ENCODE measurements at regions of chrX and their contacts with region 1.

Region 1: GRCh38 chrX:49043220-49043986 is at the start of gene TFE3:
- DNase-seq: peak; percentile 95 to 98
- ATAC-seq: peak; percentile 91 to 96 (median 94)
- H3K4me3 ChIP-seq: peak within 1 kb of the TSS; percentile 64 to 92 (median 80)
- H3K27ac ChIP-seq: peak within 1 kb of the TSS; percentile 91 to 99 (median 96)
- H3K4me1 ChIP-seq: peaks cover 0 to 35% (median 15%) of the 10 kb centered on the region in 9 donors
- H3K27me3 ChIP-seq: no peaks in the 10 kb centered on the region
- CTCF ChIP-seq: peak; percentile 38 to 76 (median 64)
- total RNA-seq, gene TFE3: 13.8 to 29.1 (median 16.1) TPM

Region 2: DNA sequence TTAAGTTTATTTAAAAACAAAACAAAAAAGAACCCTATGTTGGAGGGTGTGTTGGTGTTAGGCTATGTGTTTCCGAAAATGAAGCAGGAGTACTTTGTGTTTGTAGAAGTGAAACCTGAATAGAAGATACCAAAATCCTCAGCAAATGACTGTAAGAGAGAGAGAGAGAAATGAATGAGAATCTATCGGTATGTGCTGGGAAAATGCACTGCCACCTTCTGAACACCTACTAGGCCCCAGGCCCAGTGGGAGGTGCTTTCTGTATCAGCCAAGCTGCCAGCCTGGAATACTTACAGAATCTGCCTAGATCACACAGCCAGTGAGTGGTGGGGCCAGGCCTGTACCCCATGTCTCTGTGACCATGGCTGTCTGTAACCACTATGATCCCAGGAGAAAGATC is 109.6 kb before region 1 on chrX:
- intact Hi-C with region 1: no loop called
- DNase-seq: no peak
- ATAC-seq: no peak
- H3K4me3 ChIP-seq: no peak overlapping the region
- H3K27ac ChIP-seq: no peak overlapping the region
- H3K4me1 ChIP-seq: peaks cover 0 to 40% (median 11%) of the 10 kb centered on the region in 9 donors
- H3K27me3 ChIP-seq: no peaks in the 10 kb centered on the region
- CTCF ChIP-seq: no peak

Region 3: DNA sequence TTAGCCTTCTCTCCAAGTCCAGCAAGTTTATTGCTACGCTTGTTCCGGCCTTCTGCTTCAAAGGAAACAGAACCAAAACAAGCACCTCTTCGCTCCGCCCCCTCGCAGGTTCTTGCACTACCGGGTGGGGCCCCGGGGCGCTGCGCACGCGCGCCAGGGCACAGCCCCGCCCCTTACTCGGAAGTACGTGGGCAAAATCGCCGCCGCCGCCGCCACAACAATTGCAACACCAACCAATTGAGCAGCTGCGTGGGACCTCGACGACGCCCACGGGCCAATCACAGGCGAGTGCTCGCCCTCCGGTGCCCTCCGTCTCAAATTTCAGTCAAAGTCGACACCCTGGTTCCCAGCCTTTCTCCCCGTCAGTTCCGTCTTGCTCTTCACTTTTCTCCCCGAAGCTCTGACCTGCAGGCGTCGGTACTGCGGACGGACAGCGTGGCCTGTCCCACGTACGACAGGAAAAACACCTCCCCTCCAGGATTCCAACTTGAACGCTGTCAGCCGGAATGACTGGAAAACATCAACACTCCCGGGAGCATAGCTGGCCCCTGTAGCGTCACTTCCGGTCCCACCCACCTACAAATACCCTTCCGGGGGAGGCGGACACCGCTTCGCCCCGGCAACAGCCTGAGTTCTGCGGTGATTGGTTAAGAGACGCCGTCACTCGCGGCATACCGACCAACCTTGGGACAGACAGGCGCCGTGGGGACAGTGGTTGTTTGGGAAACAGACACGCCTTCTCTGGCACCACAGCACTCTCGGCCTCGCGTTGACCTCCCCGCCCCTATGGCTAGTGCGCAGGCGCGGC is 85.4 kb before region 1 on chrX:
- intact Hi-C with region 1: loop called in 1 of 10 experiments (anchors 10 kb)
- DNase-seq: peak; percentile 92 to 96
- ATAC-seq: peak; percentile 92 to 97 (median 96)
- H3K4me3 ChIP-seq: peak overlapping the region; percentile 21 to 72 (median 64)
- H3K27ac ChIP-seq: peak overlapping the region; percentile 75 to 99 (median 95)
- H3K4me1 ChIP-seq: peaks cover 0 to 51% (median 31%) of the 10 kb centered on the region in 9 donors
- H3K27me3 ChIP-seq: no peaks in the 10 kb centered on the region
- CTCF ChIP-seq: no peak

Region 4: DNA sequence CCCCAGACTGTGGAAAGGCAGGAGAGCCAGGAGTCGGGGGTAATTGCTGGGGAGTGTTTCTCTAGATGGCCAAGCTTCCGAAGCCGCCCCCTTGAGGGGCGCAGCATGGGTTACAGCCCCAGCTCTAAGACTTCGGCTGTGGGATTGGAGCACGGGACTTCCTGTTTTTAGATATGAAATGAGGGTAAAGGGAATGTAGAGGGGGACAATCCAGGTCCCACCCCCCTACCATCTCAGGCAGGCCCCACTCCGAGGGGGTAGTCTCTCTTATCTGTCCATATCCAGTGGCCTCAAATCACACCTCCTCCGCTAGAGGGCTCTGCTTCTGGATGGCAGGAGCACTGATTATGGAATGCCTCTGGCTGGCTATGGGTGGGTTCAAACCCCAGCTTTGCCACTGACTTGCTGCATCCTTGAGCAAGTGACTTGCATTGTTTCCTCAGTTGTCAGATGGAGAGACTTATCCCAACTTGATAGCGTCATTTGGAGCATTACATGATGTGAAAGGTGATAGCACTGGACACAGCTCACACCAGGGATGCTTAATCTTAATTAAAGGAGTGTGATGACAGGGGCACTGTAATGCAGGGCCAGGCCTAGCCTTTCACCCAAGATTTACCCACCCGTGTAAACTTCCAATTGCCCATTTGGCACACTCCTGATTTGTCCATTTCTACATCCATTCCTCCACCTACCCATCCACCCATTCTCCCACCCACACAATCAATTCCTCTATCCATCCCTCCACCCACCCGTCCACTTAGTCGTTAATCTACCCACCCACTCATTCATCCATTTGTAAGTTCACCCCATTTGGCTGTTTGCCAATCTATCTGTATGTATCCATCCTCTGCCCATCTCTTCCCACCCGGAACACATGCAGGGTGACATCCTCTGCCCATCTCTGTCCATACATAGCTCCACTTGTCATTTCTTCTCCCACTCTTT is 70.9 kb before region 1 on chrX:
- intact Hi-C with region 1: loop called in 2 of 10 experiments (anchors 10 kb)
- DNase-seq: peak in 1 of 2 donors; percentile 13
- ATAC-seq: peak in 7 of 8 donors; percentile 21 to 73 (median 59)
- H3K4me3 ChIP-seq: peak overlapping the region in 9 of 10 donors; percentile 21 to 50 (median 39)
- H3K27ac ChIP-seq: peak overlapping the region in 4 of 10 donors; percentile 34 to 58 (median 44)
- H3K4me1 ChIP-seq: peaks cover 0 to 12% (median 0%) of the 10 kb centered on the region in 9 donors
- H3K27me3 ChIP-seq: peaks cover 0 to 11% (median 0%) of the 10 kb centered on the region in 7 donors
- CTCF ChIP-seq: peak in 8 of 9 donors; percentile 8 to 62 (median 51)

Region 5: GRCh38 chrX:49002091-49002935 is 41.1 kb before region 1 on chrX and contains the start of gene GRIPAP1:
- intact Hi-C with region 1: loop called in 5 of 10 experiments (anchors 1 to 5 kb)
- DNase-seq: peak; percentile 66 to 74
- ATAC-seq: peak; percentile 88 to 98 (median 94)
- H3K4me3 ChIP-seq: peak within 1 kb of the TSS; percentile 47 to 82 (median 75)
- H3K27ac ChIP-seq: peak within 1 kb of the TSS; percentile 35 to 94 (median 84)
- H3K4me1 ChIP-seq: peaks cover 0 to 9% (median 0%) of the 10 kb centered on the region in 9 donors
- H3K27me3 ChIP-seq: no peaks in the 10 kb centered on the region
- CTCF ChIP-seq: no peak
- total RNA-seq, gene GRIPAP1: 16.2 to 26.0 (median 21.9) TPM

Region 6: DNA sequence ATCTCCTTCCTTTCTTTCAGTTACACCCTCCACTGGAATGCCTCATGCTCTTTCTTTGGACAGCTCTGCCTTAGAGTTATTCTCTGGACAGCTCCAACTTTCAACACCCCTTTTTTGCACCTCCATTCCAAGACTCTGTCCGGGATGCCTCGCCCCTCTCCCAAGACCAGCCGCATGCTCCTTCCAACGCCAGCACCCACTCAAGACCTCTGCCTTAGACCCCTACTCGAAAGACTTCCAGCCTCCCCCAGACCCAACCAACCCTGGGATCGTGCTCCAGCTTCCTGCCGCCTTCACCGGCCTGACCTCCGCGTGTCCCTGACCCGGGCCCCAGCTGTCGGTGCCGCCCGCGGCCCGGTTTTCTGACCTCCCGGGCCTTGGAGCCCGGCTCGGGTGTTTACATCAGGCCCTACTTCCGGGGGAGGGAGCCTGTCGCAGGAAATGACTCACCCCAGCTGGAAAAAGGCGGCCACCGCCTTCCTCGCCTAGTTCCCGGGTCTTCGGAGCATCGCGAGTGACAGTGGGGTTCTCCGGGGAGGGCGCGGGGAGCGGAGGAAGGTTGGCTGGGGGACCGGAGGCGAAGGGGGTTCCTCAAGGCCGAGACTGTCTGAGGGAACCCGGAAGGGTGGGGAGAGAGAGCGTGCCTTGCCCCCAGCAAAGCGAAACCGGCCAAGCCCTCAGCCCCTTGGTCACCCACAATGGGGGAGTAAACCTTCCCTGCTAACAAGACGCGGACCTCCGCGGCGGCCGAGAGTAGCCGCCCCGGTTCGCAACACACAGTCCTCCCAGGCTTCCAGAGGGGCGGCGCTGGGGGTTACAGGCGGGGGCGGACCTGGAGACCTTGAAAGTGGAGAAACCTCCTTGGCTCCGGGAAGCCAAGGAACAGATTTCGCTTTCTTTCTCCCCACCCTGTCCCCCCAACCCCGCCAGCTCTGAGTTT is 36.4 kb after region 1 on chrX and contains the start of gene WDR45:
- intact Hi-C with region 1: loop called in 1 of 10 experiments (anchors 5 kb)
- DNase-seq: peak; percentile 70 to 77
- ATAC-seq: peak; percentile 76 to 96 (median 93)
- H3K4me3 ChIP-seq: peak within 1 kb of the TSS; percentile 53 to 75 (median 68)
- H3K27ac ChIP-seq: peak within 1 kb of the TSS; percentile 89 to 98 (median 95)
- H3K4me1 ChIP-seq: peaks cover 0 to 13% (median 0%) of the 10 kb centered on the region in 9 donors
- H3K27me3 ChIP-seq: no peaks in the 10 kb centered on the region
- CTCF ChIP-seq: no peak
- total RNA-seq, gene WDR45: 45.7 to 84.7 (median 60.6) TPM

Region 7: DNA sequence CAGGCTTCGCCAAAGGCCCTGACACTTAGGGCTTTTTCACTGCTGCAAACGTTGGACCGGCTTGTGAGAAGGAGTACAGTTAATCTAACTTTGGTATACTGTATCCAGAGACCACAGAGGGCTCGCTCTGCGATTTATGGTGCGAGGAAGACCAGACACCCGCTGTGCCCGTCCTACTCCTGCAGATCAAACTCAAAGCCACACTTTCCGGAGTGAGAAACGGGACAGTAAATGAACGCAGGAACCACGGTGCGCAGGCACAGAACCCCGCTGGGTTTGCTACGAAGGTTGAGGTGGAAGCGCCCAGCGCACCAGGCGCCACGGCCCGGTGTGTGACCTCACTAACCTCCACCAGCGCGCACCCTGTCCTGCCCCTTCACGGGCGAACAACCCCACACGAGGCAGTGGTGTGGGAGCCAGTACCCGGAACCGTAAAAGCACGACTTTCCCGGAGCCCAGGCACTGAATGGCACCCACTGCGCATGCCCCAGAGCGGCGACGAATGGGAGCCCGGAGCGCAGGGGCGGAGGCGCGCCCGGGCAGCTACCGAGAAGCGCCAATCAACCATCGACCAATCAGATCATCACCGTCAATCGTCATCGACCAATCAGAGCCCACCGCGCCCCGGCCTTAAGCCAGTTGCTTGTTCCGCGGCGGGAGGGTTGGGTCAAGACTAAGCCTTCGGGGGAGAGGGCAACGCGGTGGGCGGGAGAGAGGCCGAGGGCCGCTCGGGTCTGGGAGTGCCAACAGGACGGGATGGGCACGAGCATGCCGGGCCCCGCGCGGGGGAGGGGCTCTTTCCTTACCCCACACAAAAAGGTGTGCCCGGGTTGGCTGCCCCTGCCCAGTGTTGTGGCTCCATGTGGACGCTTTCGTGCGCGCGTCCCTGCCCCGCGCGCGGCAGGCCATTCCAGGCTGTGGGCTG is 57.6 kb after region 1 on chrX:
- intact Hi-C with region 1: loop called in 1 of 10 experiments (anchors 10 kb)
- DNase-seq: peak; percentile 90 to 91
- ATAC-seq: peak; percentile 96 to 99 (median 98)
- H3K4me3 ChIP-seq: peak overlapping the region; percentile 14 to 72 (median 61)
- H3K27ac ChIP-seq: peak overlapping the region in 9 of 10 donors; percentile 57 to 85 (median 76)
- H3K4me1 ChIP-seq: peaks cover 0 to 8% (median 0%) of the 10 kb centered on the region in 9 donors
- H3K27me3 ChIP-seq: no peaks in the 10 kb centered on the region
- CTCF ChIP-seq: no peak

Measured in heart right ventricle (tissue), 16 donors.